A673 (cell line): ENCODE measurements at regions of chr17 and their contacts with region 1.

Region 1: DNA sequence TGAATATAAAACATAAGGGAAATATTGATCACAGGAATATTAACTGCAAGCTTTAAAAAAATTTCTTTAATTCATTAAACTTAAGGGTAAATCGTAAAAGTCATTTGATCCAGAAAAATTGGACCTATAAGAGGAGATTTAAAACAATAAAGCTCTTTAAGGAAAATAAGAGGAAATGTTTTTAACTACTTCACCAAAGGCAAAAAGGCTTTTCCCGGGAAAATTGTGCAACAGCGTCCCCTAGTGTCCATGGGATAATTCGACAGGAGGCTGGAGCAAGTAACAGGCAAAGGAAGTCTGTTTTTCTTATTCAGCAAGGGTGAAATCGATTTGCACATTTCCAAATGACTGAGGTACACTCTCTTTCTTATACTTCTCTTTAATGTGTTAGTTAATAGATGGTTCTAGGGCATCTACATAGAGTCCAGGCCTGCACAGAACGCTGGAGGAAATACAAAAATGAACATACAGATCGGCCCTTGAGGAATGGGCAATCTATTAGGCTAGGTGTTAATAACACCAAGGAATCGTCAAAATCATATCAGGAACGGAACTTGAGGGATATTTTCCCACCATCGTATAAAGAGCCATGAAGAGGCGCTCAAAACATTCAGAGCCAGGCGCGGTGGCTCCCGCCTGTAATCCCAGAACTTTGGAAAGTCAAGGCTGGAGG is 61.4 kb downstream of the ZNF18 start:
- DNase-seq: peak; percentile 88
- H3K4me3 ChIP-seq: no peak overlapping the region
- H3K27ac ChIP-seq: no peak overlapping the region
- H3K4me1 ChIP-seq: no peaks in the 10 kb centered on the region
- H3K27me3 ChIP-seq: no peaks in the 10 kb centered on the region
- CTCF ChIP-seq: peak; percentile 97

Region 2: GRCh38 chr17:10729334-10730193 is 1206.3 kb before region 1 on chr17 and contains the start of gene TMEM220:
- CTCF ChIA-PET with region 1: no interaction called
- POLR2A ChIA-PET with region 1: no interaction called
- intact Hi-C with region 1: loop called (anchors 10 kb)
- DNase-seq: peak; percentile 49
- H3K4me3 ChIP-seq: peak within 1 kb of the TSS; percentile 52
- H3K27ac ChIP-seq: no peak within 1 kb of the TSS
- H3K4me1 ChIP-seq: peaks cover 11% of the 10 kb centered on the region
- H3K27me3 ChIP-seq: peaks cover 4% of the 10 kb centered on the region
- CTCF ChIP-seq: no peak
- total RNA-seq, gene TMEM220: 0.11 and 1.4 TPM in 2 replicates

Region 3: DNA sequence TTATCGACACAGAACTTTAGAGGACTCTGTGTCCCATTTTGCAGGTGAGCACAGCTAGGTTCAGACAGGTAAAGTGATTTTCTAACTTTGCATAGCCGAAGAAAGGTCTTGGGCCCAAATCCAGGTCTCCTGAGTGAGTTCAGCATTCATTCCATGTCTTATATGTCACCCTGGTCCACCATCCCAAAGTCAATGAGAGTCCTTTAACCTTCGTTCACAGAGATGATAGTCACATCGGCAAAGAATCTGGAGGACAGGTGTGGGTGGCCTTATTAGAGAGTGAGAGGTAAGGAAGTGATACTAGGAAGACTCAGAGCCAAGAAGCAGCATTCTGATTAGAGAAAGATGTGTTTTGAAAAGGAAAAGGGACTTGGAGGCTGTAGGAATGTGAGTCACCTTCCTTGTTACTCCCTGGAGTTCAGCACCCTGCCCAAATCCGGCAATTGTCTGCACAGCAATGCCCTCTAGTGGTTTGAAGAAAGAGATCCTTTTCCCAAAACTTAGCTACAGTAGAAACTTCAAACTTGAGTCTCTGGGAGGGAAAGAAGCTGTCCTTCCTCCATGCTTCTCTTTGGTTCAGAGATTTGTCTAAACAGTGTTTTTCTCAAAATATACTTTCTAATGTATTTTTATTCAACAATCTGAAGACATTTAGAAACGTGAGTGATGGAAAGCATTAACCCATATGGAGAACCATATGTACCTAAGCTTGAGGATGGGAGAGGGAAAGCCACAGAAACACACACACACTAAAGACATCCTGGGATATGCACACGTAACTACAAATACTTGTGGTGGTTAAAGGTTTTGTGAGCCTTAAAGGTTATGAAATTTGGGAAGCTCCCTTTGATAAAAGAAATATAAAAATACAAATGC is 791.3 kb before region 1 on chr17:
- CTCF ChIA-PET with region 1: interaction called, 3 read pairs
- POLR2A ChIA-PET with region 1: no interaction called
- intact Hi-C with region 1: loop called (anchors 5 kb)
- DNase-seq: peak; percentile 83
- H3K4me3 ChIP-seq: no peak overlapping the region
- H3K27ac ChIP-seq: no peak overlapping the region
- H3K4me1 ChIP-seq: peaks cover 9% of the 10 kb centered on the region
- H3K27me3 ChIP-seq: no peaks in the 10 kb centered on the region
- CTCF ChIP-seq: peak; percentile 88

Region 4: DNA sequence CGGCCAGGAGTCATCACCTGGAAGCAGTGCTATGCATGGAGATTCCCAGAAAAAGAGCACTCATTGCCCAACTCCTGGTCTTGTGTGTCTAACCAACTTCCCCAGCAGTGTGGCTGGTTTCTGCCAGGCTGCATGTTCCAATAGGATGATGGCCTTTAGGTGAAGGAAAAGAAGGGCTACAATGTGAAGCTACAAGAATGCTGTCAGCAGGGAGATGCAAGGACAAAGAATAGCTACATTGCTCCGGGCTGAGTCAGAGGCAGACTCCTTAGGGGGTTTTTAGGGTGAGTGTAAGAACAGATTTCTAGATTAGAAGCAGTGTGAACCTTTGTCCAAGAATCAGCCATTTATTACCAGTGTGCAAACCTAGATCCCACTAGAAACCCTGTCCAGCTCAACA is 400.6 kb before region 1 on chr17:
- CTCF ChIA-PET with region 1: no interaction called
- POLR2A ChIA-PET with region 1: interaction called, 21 read pairs
- intact Hi-C with region 1: no loop called
- DNase-seq: peak; percentile 74
- H3K4me3 ChIP-seq: no peak overlapping the region
- H3K27ac ChIP-seq: no peak overlapping the region
- H3K4me1 ChIP-seq: peaks cover 31% of the 10 kb centered on the region
- H3K27me3 ChIP-seq: no peaks in the 10 kb centered on the region
- CTCF ChIP-seq: no peak

Region 5: DNA sequence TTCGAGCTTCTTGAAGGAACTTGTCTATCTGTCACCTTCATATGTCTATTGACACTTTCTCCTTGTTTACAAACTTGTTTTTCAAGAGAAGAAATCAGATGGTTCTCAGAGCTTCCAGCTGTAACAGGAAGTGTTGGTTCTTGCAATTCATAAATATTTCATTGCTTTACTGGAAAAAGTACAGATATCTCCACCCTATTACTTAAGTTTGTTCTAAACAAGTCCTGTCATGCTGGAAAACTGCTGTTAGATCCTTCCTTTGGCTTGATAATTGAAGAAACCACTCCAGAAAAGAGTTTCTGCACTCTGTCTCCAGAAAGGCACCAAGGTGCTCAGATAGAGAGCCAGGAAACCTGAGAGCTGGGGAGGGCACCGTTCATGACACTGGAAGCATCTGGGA is 156.0 kb before region 1 on chr17:
- CTCF ChIA-PET with region 1: no interaction called
- POLR2A ChIA-PET with region 1: no interaction called
- intact Hi-C with region 1: loop called (anchors 10 kb)
- DNase-seq: no peak
- H3K4me3 ChIP-seq: no peak overlapping the region
- H3K27ac ChIP-seq: no peak overlapping the region
- H3K4me1 ChIP-seq: no peaks in the 10 kb centered on the region
- H3K27me3 ChIP-seq: no peaks in the 10 kb centered on the region
- CTCF ChIP-seq: no peak